HEK293 (cell line): ENCODE measurements at regions of chr22 and their contacts with region 1.

Region 1: GRCh38 chr22:43090130-43090789 is 1.1 kb upstream of the TTLL1 start:
- H3K4me3 ChIP-seq: no peak overlapping the region
- H3K27ac ChIP-seq: no peak overlapping the region
- H3K4me1 ChIP-seq: no peaks in the 10 kb centered on the region
- CTCF ChIP-seq: peak; percentile 74

Region 2: GRCh38 chr22:43066844-43067385 is 23.3 kb before region 1 on chr22:
- CTCF ChIA-PET with region 1: interaction called, 10 read pairs
- POLR2A ChIA-PET with region 1: no interaction called
- H3K4me3 ChIP-seq: no peak overlapping the region
- H3K27ac ChIP-seq: peak overlapping the region; percentile 78
- H3K4me1 ChIP-seq: peaks cover 8% of the 10 kb centered on the region
- CTCF ChIP-seq: no peak